HEK293 (cell line): ENCODE measurements at regions of chr10 and their contacts with region 1.

Region 1: DNA sequence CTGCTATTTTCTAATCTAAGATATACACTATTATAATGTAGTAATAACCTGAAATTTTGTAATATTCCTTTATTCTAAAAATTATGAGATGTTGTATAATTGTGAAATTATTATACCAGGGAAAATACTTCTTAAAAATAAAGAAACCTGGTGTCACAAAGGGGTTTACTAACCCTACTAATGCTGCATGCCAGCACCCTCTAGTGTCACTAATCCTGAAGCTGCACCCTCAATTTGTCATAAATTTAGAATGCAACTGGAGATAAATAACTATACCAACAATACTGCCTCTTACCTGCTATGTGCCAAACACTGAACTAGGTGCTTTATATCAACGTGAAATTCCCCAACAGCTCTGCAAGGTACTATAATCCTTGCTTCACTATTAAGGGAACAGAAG is 30.8 kb downstream of the TM9SF3 start:
- H3K4me3 ChIP-seq: no peak overlapping the region
- H3K27ac ChIP-seq: no peak overlapping the region
- H3K4me1 ChIP-seq: no peaks in the 10 kb centered on the region; the same call in 1 of the 2 replicates
- CTCF ChIP-seq: peak; percentile 41; the same call in 1 of the 2 replicates

Region 2: GRCh38 chr10:96395931-96396877 is 159.8 kb before region 1 on chr10:
- CTCF ChIA-PET with region 1: interaction called, 17 read pairs
- POLR2A ChIA-PET with region 1: no interaction called
- H3K4me3 ChIP-seq: no peak overlapping the region
- H3K27ac ChIP-seq: no peak overlapping the region
- H3K4me1 ChIP-seq: no peaks in the 10 kb centered on the region
- CTCF ChIP-seq: peak; percentile 68

Region 3: DNA sequence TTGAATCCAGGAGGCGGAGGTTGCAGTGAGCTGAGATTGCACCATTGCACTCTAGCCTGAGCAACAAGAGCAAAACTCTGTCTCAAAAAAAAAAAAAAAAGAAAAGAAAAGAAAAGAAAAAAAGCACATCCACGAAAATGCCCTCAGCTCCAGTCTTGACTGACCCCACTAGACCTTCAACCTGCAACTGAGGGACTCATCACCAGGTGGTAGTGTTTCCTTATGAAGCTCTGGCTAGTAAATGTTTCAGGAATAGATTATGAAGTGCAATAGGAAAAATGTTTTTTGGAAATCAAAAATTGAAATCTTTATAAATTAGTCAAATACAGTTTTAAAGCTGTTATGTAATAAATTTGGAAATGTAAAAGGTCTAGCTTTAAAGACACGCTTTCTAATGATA is 64.7 kb before region 1 on chr10:
- CTCF ChIA-PET with region 1: interaction called, 11 read pairs
- POLR2A ChIA-PET with region 1: no interaction called
- H3K4me3 ChIP-seq: no peak overlapping the region
- H3K27ac ChIP-seq: no peak overlapping the region
- H3K4me1 ChIP-seq: no peaks in the 10 kb centered on the region
- CTCF ChIP-seq: no peak